ENCODE measurements at regions of chr5 and their contacts with region 1.

Region 1: DNA sequence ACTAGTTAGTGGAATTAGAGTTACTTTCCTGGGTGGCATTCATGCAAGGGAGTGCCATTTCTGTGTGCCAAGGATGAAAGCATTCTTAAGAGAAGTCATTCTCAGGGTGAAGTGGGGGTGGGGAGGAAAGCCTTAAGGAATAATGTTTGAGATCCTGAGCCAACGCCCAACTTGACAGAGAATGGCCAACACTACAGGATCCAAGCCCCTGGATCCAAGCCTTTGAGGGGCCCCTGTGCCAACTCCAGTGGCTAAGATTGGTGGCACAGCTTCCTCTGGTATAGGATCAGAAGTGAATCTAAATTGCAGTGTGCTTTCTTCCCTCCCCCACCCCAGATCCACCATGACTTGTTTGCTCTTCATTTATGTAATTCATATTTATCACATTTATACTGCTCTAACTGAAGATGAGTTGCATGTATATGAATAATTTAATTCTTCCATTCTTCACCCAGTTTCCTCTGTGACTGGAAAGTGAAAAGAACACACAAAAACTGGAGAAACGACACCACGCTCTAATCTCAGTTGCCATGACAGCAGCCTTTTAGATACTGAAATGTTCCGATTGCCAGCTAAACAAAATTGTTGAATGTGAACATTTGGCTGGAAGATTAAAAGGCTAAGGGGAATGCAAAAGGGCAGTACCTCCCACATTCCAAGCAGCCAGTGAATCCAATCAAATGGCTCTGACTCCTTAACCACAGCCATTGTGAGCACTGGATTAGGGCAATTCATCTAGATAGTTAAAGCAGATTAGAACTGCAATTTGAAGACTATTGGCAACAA is 4.5 kb downstream of the ZNF608 start:
- DNase-seq: no peak
- ATAC-seq: no peak
- H3K4me3 ChIP-seq: peak overlapping the region in 7 of 12 donors; percentile 67 to 77 (median 70)
- H3K27ac ChIP-seq: peak overlapping the region in 4 of 12 donors; percentile 35 to 96 (median 91)
- H3K4me1 ChIP-seq: peaks cover 0 to 73% (median 44%) of the 10 kb centered on the region in 12 donors
- H3K27me3 ChIP-seq: peaks cover 0 to 11% (median 0%) of the 10 kb centered on the region in 9 donors
- CTCF ChIP-seq: no peak
- POLR2A ChIP-seq: no peak

Region 2: DNA sequence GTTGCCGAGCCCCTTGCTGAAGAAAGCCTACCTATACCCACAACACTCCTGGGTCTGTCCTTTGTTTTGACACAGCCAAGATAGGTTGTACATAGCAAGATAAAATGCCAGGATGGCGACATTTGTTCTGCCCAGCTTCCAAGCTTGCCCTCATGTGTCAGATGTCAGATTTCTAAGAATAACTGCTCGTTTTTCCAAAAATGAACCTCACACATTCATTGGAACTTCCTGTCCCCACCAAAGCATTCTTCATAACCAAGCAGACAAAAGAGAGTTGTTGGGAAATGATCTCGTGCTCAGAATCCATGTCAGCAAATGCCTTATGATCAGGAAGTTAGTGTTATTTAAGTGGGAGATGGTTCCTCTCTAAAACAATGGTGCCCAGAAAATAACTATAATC is 205.6 kb before region 1 on chr5:
- intact Hi-C with region 1: loop called in 1 of 10 experiments (anchors 5 kb)
- DNase-seq: no peak
- ATAC-seq: peak; percentile 32 to 70 (median 66)
- H3K4me3 ChIP-seq: no peak overlapping the region
- H3K27ac ChIP-seq: peak overlapping the region in 7 of 12 donors; percentile 2 to 60 (median 17)
- H3K4me1 ChIP-seq: peaks cover 0 to 29% (median 15%) of the 10 kb centered on the region in 12 donors
- H3K27me3 ChIP-seq: no peaks in the 10 kb centered on the region
- CTCF ChIP-seq: no peak
- POLR2A ChIP-seq: no peak

Region 3: DNA sequence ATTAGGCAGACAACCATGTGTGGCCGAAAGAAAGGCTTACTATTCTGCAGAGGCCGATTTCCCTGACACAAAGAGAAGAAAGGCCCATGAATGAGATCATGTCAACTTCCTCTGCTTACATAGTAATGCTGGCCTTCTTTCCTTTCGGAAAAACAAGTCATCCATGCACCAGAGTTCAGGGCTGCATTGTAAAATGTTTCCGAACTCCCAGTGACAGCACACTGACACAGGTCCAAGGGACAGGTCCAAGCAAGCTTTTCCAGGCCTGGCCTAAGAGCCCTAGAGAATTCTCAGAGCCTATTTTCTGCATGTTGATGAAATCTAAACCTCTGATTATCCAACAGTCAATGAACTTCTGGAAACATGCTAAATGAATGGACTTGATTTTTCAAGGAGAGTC is 136.4 kb before region 1 on chr5:
- intact Hi-C with region 1: loop called in 2 of 10 experiments (anchors 5 kb)
- DNase-seq: peak in 3 of 5 donors; percentile 56 to 67 (median 62)
- ATAC-seq: peak; percentile 89 to 98 (median 89)
- H3K4me3 ChIP-seq: no peak overlapping the region
- H3K27ac ChIP-seq: peak overlapping the region in 10 of 12 donors; percentile 9 to 68 (median 57)
- H3K4me1 ChIP-seq: peaks cover 0 to 27% (median 20%) of the 10 kb centered on the region in 12 donors
- H3K27me3 ChIP-seq: no peaks in the 10 kb centered on the region
- CTCF ChIP-seq: no peak
- POLR2A ChIP-seq: no peak

Region 4: GRCh38 chr5:124706729-124707361 is 35.1 kb before region 1 on chr5:
- intact Hi-C with region 1: loop called in 5 of 10 experiments (anchors 5 kb)
- DNase-seq: peak in 4 of 5 donors; percentile 61 to 74 (median 66)
- ATAC-seq: peak; percentile 33 to 74 (median 70)
- H3K4me3 ChIP-seq: peak overlapping the region in 8 of 12 donors; percentile 2 to 26 (median 10)
- H3K27ac ChIP-seq: peak overlapping the region in 7 of 12 donors; percentile 11 to 53 (median 35)
- H3K4me1 ChIP-seq: peaks cover 6 to 78% (median 51%) of the 10 kb centered on the region in 12 donors
- H3K27me3 ChIP-seq: no peaks in the 10 kb centered on the region
- CTCF ChIP-seq: no peak
- POLR2A ChIP-seq: no peak

Region 5: DNA sequence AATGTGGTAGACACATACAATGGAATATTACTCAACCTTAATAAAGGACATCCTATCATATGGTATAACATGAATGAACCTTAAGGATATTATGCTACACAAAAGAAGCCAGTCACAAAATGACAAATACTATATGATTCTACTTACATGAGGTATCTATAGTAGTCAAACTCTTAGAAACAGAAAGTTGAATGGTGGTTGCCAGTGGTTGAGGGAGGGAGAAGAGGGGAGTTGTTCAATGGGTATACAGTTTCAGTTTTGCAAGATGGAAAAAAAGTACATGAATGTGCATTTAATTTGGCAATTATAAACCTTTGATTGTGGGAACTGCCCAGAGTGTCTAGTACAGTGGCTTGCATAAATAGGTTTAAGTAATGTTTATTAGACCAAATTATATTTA is 477.8 kb after region 1 on chr5:
- intact Hi-C with region 1: no loop called
- DNase-seq: no peak
- ATAC-seq: no peak
- H3K4me3 ChIP-seq: no peak overlapping the region
- H3K27ac ChIP-seq: no peak overlapping the region
- H3K4me1 ChIP-seq: no peaks in the 10 kb centered on the region
- H3K27me3 ChIP-seq: no peaks in the 10 kb centered on the region
- CTCF ChIP-seq: no peak
- POLR2A ChIP-seq: no peak

Region 6: GRCh38 chr5:125375143-125375542 is 633.2 kb after region 1 on chr5:
- intact Hi-C with region 1: no loop called
- DNase-seq: no peak
- ATAC-seq: no peak
- H3K4me3 ChIP-seq: no peak overlapping the region
- H3K27ac ChIP-seq: no peak overlapping the region
- H3K4me1 ChIP-seq: no peaks in the 10 kb centered on the region
- H3K27me3 ChIP-seq: no peaks in the 10 kb centered on the region
- CTCF ChIP-seq: no peak
- POLR2A ChIP-seq: no peak

Measured in heart left ventricle (tissue), 16 donors.